ENCODE measurements at regions of chr11 and their contacts with region 1.

Region 1: GRCh38 chr11:33687733-33688479 is 12.7 kb downstream of the C11orf91 start:
- DNase-seq: peak in 4 of 10 donors; percentile 61 to 71 (median 66)

Region 2: DNA sequence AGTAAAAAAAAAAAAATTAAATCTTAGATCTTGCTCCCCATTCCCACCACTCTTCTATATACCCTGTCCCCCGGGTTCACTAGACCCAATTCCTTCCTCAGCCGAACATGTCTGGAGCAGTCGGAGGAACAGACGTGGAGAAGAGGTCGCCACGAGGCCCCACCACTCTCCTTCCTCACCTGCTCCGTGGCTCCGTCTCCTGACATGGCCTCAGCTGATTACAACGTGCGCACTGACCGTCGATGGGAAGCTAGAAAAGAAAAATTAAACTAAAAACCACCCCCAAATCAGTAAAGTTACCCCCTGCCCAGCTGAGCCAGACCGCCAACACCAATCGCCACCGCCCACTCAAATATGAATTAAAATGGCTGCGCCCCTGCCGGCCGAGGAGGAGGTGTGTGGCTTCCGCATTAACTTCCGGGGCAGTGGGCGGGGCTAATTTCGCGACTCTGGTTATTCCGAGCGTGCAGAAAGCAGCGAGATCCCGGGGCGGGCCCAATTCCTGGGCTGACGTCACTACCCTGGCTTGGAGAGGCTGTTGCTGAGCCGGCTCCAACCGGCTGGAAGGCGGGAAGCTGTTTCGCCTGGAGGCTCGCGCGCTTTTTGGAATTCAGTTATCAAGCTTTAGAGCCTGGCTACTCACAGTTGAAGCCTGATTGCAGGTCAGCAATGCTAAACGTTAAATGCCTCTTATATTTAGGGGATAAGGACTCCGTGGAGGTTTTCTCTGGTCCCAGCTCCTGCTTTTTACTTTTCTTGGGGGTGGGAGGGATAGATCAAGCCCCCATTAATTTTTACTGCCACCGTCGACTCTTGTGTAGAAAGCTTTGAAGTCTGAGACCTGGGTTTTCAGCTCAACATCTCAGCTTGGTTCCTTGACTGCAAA is 526.5 kb before region 1 on chr11 and contains the start of gene CSTF3:
- intact Hi-C with region 1: loop called (anchors 5 kb)
- DNase-seq: peak; percentile 100

Region 3: DNA sequence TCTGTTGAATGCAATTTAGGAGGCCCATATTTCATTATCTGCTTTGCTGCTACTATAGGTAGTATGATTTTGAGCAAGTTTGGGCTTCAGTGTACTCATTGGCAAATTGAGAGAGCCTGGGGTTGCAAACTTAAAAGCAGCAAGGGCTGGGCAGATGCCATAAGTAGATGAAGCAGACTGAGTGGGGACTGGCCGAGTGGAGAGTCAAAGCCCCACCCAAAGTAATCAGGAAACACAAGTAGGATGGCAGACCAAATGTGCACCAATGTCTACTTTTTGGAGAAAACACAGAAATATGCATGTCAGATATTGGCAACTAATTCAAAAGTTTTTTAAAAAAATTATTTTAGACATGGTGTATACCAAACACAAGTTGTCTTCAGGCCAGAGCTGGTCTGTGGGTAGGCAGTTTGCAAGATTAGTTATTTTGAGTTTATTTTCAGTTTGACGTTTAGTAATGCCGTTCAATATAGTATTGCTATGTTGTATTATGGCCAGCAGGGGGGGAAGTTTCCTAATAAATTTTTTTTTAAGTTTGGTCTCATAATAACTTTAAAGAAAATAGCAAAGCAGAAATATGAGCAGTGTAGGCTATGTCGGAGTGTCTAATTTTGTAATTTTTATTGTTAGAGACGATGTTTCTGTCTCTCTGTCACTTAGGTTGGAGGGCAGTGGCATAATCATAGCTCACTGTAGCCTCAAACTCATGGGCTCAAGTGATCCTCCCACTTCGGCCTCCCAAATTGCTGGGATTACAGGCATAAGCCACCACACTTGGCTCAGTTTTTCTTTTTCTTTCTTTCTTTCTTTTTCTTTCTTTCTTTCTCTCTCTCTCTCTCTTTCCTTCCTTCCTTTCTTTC is 325.6 kb before region 1 on chr11:
- intact Hi-C with region 1: loop called (anchors 1 kb)
- DNase-seq: peak in 1 of 10 donors; percentile 29

Region 4: DNA sequence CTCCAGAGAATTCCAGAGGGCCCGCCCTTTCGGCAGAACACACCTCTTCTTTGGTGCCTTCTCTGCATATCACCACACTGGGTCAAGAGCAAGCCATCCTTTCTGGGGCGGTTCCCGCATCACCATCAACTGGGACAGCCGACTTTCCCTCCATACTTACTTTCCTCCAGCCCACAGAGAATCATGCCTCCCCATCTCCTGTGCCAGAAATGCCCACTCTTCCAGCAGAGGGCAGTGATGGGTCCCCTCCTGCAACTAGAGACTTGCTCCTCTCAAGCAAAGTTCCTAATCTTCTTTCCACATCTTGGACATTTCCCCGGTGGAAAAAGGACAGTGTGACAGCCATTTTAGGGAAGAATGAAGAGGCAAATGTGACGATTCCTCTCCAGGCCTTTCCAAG is 145.0 kb before region 1 on chr11:
- intact Hi-C with region 1: loop called (anchors 2 kb)
- DNase-seq: peak in 9 of 10 donors; percentile 44 to 94 (median 66)

Region 5: GRCh38 chr11:33620423-33621171 is 67.3 kb before region 1 on chr11:
- intact Hi-C with region 1: loop called (anchors 10 kb)
- DNase-seq: no peak

Region 6: GRCh38 chr11:33642461-33643166 is 45.3 kb before region 1 on chr11:
- intact Hi-C with region 1: no loop called
- DNase-seq: no peak